CD8-positive, alpha-beta T cell (primary cell): ENCODE measurements at regions of chr3 and their contacts with region 1.

Region 1: GRCh38 chr3:61570813-61571212 is 9.4 kb downstream of the PTPRG start:
- DNase-seq: no peak
- ATAC-seq: no peak
- H3K4me3 ChIP-seq: no peak overlapping the region
- H3K4me3 Mint-ChIP-seq: no peak overlapping the region
- H3K27ac ChIP-seq: no peak overlapping the region
- H3K27ac Mint-ChIP-seq: no peak overlapping the region
- H3K4me1 ChIP-seq: no peaks in the 10 kb centered on the region
- H3K4me1 Mint-ChIP-seq: no peaks in the 10 kb centered on the region
- H3K27me3 ChIP-seq: no peaks in the 10 kb centered on the region
- H3K27me3 Mint-ChIP-seq: peaks cover 5% of the 10 kb centered on the region
- CTCF ChIP-seq: no peak

Region 2: DNA sequence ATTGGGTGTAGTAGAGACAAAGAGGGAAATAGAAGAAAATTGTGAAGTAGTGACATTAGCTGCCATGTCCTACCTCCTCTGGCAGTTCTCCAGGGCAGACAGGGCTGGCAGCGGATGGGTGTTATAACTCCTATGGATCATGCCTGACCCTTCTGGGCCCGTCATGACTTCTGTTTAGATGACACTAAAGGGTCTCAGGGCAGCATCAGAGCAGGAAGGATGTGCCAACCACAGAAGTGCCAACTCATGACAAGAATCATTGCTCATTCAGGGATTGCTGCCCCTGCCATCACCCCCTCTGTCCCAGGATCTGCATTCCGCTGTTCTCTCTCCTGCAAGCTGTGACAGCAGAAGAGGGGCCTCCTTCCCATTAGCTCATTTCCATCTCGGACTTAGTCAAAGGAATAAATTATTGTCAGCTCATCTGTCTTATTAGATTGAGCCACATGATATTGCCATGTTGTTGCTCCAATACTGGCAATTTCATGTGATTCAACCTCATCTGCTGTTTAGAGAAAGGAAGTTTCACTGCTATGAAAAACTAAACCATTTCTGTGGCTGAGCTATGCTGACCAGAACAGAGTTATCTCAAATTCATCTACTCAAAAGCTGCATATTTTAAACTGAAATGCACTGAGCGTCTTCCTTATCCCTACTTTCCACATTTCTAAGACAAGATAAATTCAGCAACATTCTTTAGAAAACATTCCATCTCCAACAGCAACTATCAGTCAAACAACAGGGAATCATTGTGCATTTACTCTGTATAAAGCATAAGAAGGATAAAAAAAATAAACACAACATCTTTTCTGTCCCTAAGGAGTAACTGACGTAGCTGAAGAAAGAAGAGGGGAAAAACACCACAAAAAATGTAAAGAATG is 591.1 kb before region 1 on chr3:
- CTCF ChIA-PET with region 1: no interaction called
- POLR2A ChIA-PET with region 1: no interaction called
- intact Hi-C with region 1: no loop called
- DNase-seq: no peak
- ATAC-seq: no peak
- H3K4me3 ChIP-seq: no peak overlapping the region
- H3K4me3 Mint-ChIP-seq: no peak overlapping the region
- H3K27ac ChIP-seq: no peak overlapping the region
- H3K27ac Mint-ChIP-seq: no peak overlapping the region
- H3K4me1 ChIP-seq: no peaks in the 10 kb centered on the region
- H3K4me1 Mint-ChIP-seq: no peaks in the 10 kb centered on the region
- H3K27me3 ChIP-seq: no peaks in the 10 kb centered on the region
- H3K27me3 Mint-ChIP-seq: no peaks in the 10 kb centered on the region
- CTCF ChIP-seq: no peak

Region 3: GRCh38 chr3:61530355-61530754 is 40.5 kb before region 1 on chr3:
- CTCF ChIA-PET with region 1: no interaction called
- POLR2A ChIA-PET with region 1: no interaction called
- intact Hi-C with region 1: no loop called
- DNase-seq: peak in 2 of 9 experiments; percentile 2 to 9
- ATAC-seq: no peak
- H3K4me3 ChIP-seq: no peak overlapping the region
- H3K4me3 Mint-ChIP-seq: no peak overlapping the region
- H3K27ac ChIP-seq: no peak overlapping the region
- H3K27ac Mint-ChIP-seq: no peak overlapping the region
- H3K4me1 ChIP-seq: no peaks in the 10 kb centered on the region
- H3K4me1 Mint-ChIP-seq: no peaks in the 10 kb centered on the region
- H3K27me3 ChIP-seq: no peaks in the 10 kb centered on the region
- H3K27me3 Mint-ChIP-seq: no peaks in the 10 kb centered on the region
- CTCF ChIP-seq: no peak

Region 4: GRCh38 chr3:61547625-61548024 is 23.2 kb before region 1 on chr3:
- CTCF ChIA-PET with region 1: no interaction called
- POLR2A ChIA-PET with region 1: no interaction called
- intact Hi-C with region 1: loop called in 1 of 2 experiments (anchors 1 kb)
- DNase-seq: no peak
- ATAC-seq: no peak
- H3K4me3 ChIP-seq: no peak overlapping the region
- H3K4me3 Mint-ChIP-seq: no peak overlapping the region
- H3K27ac ChIP-seq: no peak overlapping the region
- H3K27ac Mint-ChIP-seq: no peak overlapping the region
- H3K4me1 ChIP-seq: no peaks in the 10 kb centered on the region
- H3K4me1 Mint-ChIP-seq: no peaks in the 10 kb centered on the region
- H3K27me3 ChIP-seq: no peaks in the 10 kb centered on the region
- H3K27me3 Mint-ChIP-seq: no peaks in the 10 kb centered on the region
- CTCF ChIP-seq: no peak